ENCODE measurements at regions of chr2 and their contacts with region 1.

Region 1: DNA sequence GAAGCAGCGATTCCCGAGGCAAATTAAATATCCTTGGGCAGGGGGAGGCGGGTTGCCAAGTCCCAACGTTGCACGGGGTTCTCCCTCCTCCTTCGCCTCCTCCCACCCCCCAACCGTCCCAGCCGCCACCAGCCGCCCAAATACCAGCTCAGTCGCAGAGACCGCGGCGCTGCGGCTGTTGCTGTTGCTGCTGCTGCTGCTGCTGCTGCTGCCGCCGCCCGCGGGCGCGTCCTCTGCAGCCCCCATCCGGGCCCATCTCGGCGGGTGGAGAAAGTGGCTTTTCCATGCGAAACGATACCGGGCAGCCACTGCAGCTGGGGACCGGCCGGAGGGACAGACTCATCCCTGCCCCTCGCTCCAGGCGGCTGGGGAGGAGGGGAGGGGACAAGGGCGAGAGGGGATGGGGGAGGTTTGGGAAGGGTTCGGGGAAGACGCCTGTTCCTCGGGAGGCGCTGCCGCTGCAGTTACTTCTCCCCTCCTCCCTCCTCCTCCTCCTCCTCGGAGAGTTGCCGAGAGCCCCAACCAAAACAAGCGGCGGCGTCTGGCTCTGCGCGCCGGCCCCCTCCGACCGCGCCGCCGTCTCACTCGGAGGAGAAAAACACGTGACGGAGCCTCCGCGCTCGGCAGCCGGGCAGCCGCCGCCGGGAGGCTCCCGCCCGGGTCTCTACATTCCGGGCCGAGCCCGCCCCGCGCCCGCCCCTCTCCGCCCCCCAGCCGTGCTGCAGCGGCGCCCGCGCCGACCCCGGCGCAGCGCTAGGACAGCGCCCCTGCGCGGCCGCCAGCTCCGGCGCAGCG is at the start of gene IRS1:
- DNase-seq: peak; percentile 46 to 66 (median 50)
- H3K4me3 ChIP-seq: peak within 1 kb of the TSS; percentile 29 to 66
- H3K4me3 Mint-ChIP-seq: peak within 1 kb of the TSS; percentile 84 to 90 (median 88)
- H3K27ac ChIP-seq: peak within 1 kb of the TSS; percentile 1
- H3K27ac Mint-ChIP-seq: peak within 1 kb of the TSS in 4 of 7 donors; percentile 42 to 84 (median 62)
- H3K4me1 ChIP-seq: peaks cover 22% of the 10 kb centered on the region
- H3K4me1 Mint-ChIP-seq: peaks cover 18 to 35% (median 24%) of the 10 kb centered on the region in 4 donors
- H3K27me3 ChIP-seq: no peaks in the 10 kb centered on the region
- H3K27me3 Mint-ChIP-seq: peaks cover 4 to 11% of the 10 kb centered on the region in 2 donors
- total RNA-seq, gene IRS1: 2.2 to 2.4 TPM

Region 2: DNA sequence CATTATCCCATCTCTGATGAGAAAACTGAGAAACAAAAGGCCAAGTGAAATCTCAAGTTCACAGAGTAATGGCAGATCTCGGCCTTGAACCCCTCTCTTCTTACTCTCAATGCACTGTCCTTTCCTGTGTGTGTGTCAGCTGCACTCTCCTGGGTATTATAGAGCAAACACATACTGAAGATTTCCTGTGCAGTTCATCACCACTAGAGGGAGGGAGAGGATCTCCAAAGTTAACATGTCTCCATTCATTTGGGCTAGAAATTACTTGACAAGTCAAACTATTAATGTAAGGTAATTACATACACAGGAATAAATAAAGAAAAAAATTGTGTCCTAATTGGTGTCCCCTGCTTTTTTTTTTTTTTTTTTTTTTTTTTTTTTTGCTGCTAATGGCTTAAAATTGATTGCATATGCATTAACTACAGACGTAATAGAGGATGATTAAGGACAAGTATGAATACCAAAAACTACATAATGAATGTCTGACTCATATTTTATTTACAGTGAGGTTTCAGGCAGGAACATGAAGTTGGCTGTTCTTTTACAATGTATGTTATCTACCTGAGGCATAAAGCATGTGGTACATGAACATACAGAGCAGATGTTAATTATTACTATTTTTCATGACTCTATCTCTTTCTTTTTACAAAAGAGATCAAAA is 1130.6 kb before region 1 on chr2:
- CTCF ChIA-PET with region 1: interaction called, 18 read pairs
- POLR2A ChIA-PET with region 1: no interaction called
- intact Hi-C with region 1: loop called (anchors 1 kb)
- DNase-seq: peak; percentile 38 to 50 (median 43)
- H3K4me3 ChIP-seq: no peak overlapping the region
- H3K4me3 Mint-ChIP-seq: no peak overlapping the region
- H3K27ac ChIP-seq: no peak overlapping the region
- H3K27ac Mint-ChIP-seq: no peak overlapping the region
- H3K4me1 ChIP-seq: no peaks in the 10 kb centered on the region
- H3K4me1 Mint-ChIP-seq: no peaks in the 10 kb centered on the region
- H3K27me3 ChIP-seq: no peaks in the 10 kb centered on the region
- H3K27me3 Mint-ChIP-seq: peaks cover 0 to 7% of the 10 kb centered on the region in 2 donors

Region 3: GRCh38 chr2:226215902-226216503 is 583.4 kb before region 1 on chr2:
- CTCF ChIA-PET with region 1: interaction called, 37 read pairs
- POLR2A ChIA-PET with region 1: no interaction called
- intact Hi-C with region 1: loop called (anchors 1 kb)
- DNase-seq: peak; percentile 42 to 58 (median 50)
- H3K4me3 ChIP-seq: no peak overlapping the region
- H3K4me3 Mint-ChIP-seq: no peak overlapping the region
- H3K27ac ChIP-seq: no peak overlapping the region
- H3K27ac Mint-ChIP-seq: no peak overlapping the region
- H3K4me1 ChIP-seq: no peaks in the 10 kb centered on the region
- H3K4me1 Mint-ChIP-seq: peaks cover 0 to 3% (median 2%) of the 10 kb centered on the region in 4 donors
- H3K27me3 ChIP-seq: no peaks in the 10 kb centered on the region
- H3K27me3 Mint-ChIP-seq: peaks cover 4 to 7% of the 10 kb centered on the region in 2 donors

Region 4: GRCh38 chr2:226813148-226813701 is 13.8 kb after region 1 on chr2:
- CTCF ChIA-PET with region 1: interaction called, 12 read pairs
- POLR2A ChIA-PET with region 1: no interaction called
- intact Hi-C with region 1: no loop called
- DNase-seq: no peak
- H3K4me3 ChIP-seq: no peak overlapping the region
- H3K4me3 Mint-ChIP-seq: no peak overlapping the region
- H3K27ac ChIP-seq: no peak overlapping the region
- H3K27ac Mint-ChIP-seq: no peak overlapping the region
- H3K4me1 ChIP-seq: no peaks in the 10 kb centered on the region
- H3K4me1 Mint-ChIP-seq: no peaks in the 10 kb centered on the region
- H3K27me3 ChIP-seq: no peaks in the 10 kb centered on the region
- H3K27me3 Mint-ChIP-seq: peaks cover 19 to 32% of the 10 kb centered on the region in 2 donors

Region 5: DNA sequence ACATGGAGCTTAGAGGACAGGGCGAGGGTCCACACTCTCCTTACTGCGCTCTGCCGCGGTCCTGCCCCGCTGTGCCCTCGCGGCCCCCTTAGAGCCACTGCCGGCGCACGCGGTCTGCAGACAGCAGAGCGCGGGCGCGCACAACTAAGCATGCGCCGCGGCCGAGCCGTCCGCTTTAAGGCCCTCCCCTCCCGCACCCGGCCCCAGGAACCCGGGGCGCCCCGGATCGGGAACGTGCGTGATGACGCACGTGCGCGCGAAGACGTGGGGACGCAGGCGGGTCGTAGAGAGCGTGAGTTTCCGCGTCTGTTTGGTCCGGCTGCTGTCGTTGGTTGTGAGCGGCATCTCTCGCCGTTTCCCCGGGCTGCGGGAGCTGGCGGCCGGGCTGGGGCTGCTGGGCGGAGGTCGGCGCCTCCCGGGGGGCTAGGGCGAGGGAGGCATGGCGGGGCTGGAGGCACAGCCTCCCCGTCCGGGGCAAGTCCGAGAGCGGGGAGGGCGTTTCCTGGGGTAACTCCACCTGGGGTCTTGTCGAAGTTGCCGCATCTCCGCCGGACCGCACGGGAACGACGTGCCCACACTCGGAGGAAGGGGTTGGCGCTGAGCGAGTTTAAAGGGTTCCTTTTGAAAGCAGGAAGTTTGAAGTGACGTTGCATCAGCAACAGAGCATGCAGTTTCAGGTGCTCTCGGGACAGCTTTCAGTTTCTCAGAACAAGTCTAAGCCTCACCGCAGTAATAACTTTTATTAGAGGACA is 36.6 kb after region 1 on chr2 and contains the start of gene RHBDD1:
- CTCF ChIA-PET with region 1: interaction called, 15 read pairs
- POLR2A ChIA-PET with region 1: interaction called, 22 read pairs
- intact Hi-C with region 1: loop called (anchors 1 kb)
- DNase-seq: peak; percentile 93 to 95 (median 95)
- H3K4me3 ChIP-seq: peak within 1 kb of the TSS; percentile 64 to 94
- H3K4me3 Mint-ChIP-seq: peak within 1 kb of the TSS; percentile 91 to 99 (median 97)
- H3K27ac ChIP-seq: peak within 1 kb of the TSS; percentile 98
- H3K27ac Mint-ChIP-seq: peak within 1 kb of the TSS; percentile 97 to 100 (median 100)
- H3K4me1 ChIP-seq: peaks cover 63% of the 10 kb centered on the region
- H3K4me1 Mint-ChIP-seq: peaks cover 33 to 71% (median 50%) of the 10 kb centered on the region in 4 donors
- H3K27me3 ChIP-seq: no peaks in the 10 kb centered on the region
- H3K27me3 Mint-ChIP-seq: no peaks in the 10 kb centered on the region
- total RNA-seq, gene RHBDD1: 54.6 to 66.0 TPM

Region 6: GRCh38 chr2:226891780-226892590 is 92.6 kb after region 1 on chr2:
- CTCF ChIA-PET with region 1: no interaction called
- POLR2A ChIA-PET with region 1: no interaction called
- intact Hi-C with region 1: no loop called
- DNase-seq: no peak
- H3K4me3 ChIP-seq: no peak overlapping the region
- H3K4me3 Mint-ChIP-seq: no peak overlapping the region
- H3K27ac ChIP-seq: no peak overlapping the region
- H3K27ac Mint-ChIP-seq: no peak overlapping the region
- H3K4me1 ChIP-seq: no peaks in the 10 kb centered on the region
- H3K4me1 Mint-ChIP-seq: peaks cover 0 to 5% (median 2%) of the 10 kb centered on the region in 4 donors
- H3K27me3 ChIP-seq: no peaks in the 10 kb centered on the region
- H3K27me3 Mint-ChIP-seq: no peaks in the 10 kb centered on the region

Region 7: GRCh38 chr2:226943862-226944620 is 144.7 kb after region 1 on chr2:
- CTCF ChIA-PET with region 1: no interaction called
- POLR2A ChIA-PET with region 1: no interaction called
- intact Hi-C with region 1: no loop called
- DNase-seq: no peak
- H3K4me3 ChIP-seq: no peak overlapping the region
- H3K4me3 Mint-ChIP-seq: no peak overlapping the region
- H3K27ac ChIP-seq: no peak overlapping the region
- H3K27ac Mint-ChIP-seq: no peak overlapping the region
- H3K4me1 ChIP-seq: no peaks in the 10 kb centered on the region
- H3K4me1 Mint-ChIP-seq: peaks cover 0 to 5% (median under 1%) of the 10 kb centered on the region in 4 donors
- H3K27me3 ChIP-seq: no peaks in the 10 kb centered on the region
- H3K27me3 Mint-ChIP-seq: no peaks in the 10 kb centered on the region